Mammary epithelial cell (primary cell): ENCODE measurements at regions of chr4 and their contacts with region 1.

Region 1: DNA sequence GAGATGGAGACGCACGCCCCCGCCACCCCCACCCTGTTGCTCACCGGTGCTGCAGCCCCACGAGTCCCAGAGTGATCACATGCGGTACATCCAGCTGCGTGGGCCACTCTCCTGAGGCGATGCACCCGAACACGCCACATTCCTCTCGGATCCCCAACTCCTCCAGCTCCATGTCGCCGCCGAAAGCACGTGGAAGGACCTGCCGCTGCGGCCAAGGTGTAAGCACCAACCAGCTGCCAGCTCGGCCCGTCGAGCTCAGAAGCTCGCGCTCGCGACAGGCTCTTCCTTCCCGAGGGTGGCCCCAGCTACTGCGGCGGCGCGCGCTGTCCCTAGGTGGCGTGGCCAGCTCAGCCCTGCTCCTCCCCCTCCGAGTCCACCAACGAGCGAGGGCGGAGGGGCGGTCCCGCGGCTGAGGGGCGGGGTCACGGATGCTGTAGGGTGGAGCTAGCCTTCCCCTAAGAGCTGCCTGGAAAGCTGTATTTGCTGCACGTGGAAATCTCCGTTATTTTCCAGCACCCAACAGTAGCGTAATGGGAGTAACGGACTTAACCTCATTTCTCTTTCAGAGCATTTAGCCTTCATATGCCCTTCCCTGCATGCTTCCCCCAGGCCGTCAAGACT is at the start of gene PPAT:
- DNase-seq: peak; percentile 99
- H3K4me3 ChIP-seq: peak within 1 kb of the TSS; percentile 85 to 89 (median 88)
- H3K27ac ChIP-seq: peak within 1 kb of the TSS; percentile 95
- H3K4me1 ChIP-seq: peaks cover 9% of the 10 kb centered on the region
- H3K27me3 ChIP-seq: no peaks in the 10 kb centered on the region
- CTCF ChIP-seq: no peak
- total RNA-seq, gene PPAT: 20.0 to 28.4 TPM

Region 2: DNA sequence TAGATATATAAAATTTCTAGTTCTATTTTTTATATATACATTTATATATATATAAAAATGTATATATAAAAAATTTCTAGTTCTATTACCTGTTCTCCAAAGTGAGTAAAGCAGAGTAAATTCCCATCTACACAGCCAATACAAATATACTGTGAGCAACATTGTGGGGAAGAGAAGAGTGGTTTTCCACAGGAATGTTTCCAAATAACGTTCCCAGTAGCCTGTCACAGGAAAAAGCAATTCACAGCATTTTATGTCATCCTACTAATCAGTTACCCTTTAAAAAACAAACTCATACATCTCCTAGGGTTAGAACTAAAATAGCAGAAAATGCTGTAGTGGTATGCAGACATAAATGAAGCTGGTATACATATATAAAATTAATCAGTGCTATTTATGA is 92.7 kb before region 1 on chr4:
- CTCF ChIA-PET with region 1: no interaction called
- dilution Hi-C with region 1: no loop called
- in situ Hi-C with region 1: no loop called
- intact Hi-C with region 1: no loop called
- DNase-seq: no peak
- H3K4me3 ChIP-seq: no peak overlapping the region
- H3K27ac ChIP-seq: no peak overlapping the region
- H3K4me1 ChIP-seq: no peaks in the 10 kb centered on the region
- H3K27me3 ChIP-seq: no peaks in the 10 kb centered on the region
- CTCF ChIP-seq: no peak

Region 3: GRCh38 chr4:56410235-56411062 is 25.0 kb before region 1 on chr4:
- CTCF ChIA-PET with region 1: no interaction called
- dilution Hi-C with region 1: no loop called
- in situ Hi-C with region 1: no loop called
- intact Hi-C with region 1: loop called (anchors 1 kb)
- DNase-seq: peak; percentile 96
- H3K4me3 ChIP-seq: peak overlapping the region; percentile 22 to 32 (median 32)
- H3K27ac ChIP-seq: peak overlapping the region; percentile 96
- H3K4me1 ChIP-seq: peaks cover 13% of the 10 kb centered on the region
- H3K27me3 ChIP-seq: no peaks in the 10 kb centered on the region
- CTCF ChIP-seq: no peak

Region 4: GRCh38 chr4:56450342-56450741 is 14.9 kb after region 1 on chr4:
- CTCF ChIA-PET with region 1: no interaction called
- dilution Hi-C with region 1: no loop called
- in situ Hi-C with region 1: no loop called
- intact Hi-C with region 1: no loop called
- DNase-seq: no peak
- H3K4me3 ChIP-seq: no peak overlapping the region
- H3K27ac ChIP-seq: no peak overlapping the region
- H3K4me1 ChIP-seq: no peaks in the 10 kb centered on the region
- H3K27me3 ChIP-seq: no peaks in the 10 kb centered on the region
- CTCF ChIP-seq: no peak

Region 5: GRCh38 chr4:56467284-56468096 is 32.1 kb after region 1 on chr4 and contains the start of gene SRP72:
- CTCF ChIA-PET with region 1: no interaction called
- dilution Hi-C with region 1: no loop called
- in situ Hi-C with region 1: no loop called
- intact Hi-C with region 1: loop called (anchors 1 kb)
- DNase-seq: peak; percentile 86
- H3K4me3 ChIP-seq: peak within 1 kb of the TSS; percentile 74 to 100 (median 99)
- H3K27ac ChIP-seq: peak within 1 kb of the TSS; percentile 99
- H3K4me1 ChIP-seq: peaks cover 10% of the 10 kb centered on the region
- H3K27me3 ChIP-seq: no peaks in the 10 kb centered on the region
- CTCF ChIP-seq: no peak
- total RNA-seq, gene SRP72: 91.2 to 190 TPM